ENCODE measurements at regions of chr10 and their contacts with region 1.

Region 1: DNA sequence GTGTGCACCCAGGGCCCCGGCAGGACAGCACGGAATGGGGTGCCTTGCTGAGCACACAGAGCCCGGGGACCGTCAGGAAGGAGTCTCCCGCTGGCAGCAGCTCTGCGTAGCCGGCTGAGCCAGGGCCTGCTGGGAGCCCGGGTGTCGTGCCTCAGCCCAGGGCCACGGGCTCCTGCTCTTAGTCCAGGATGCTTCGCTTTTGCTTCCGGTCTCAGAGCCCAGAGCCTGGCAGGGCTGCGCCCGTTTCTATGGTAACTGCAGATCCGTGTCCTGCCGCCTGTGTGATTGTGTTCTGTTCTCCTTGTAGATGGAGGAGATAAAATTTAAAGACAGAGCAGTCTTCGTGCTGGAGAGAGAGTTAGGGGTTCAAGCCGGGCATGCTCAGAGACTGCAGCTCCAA is 53.7 kb upstream of the DPYSL4 start:
- DNase-seq: no peak
- ATAC-seq: no peak
- H3K4me3 Mint-ChIP-seq: no peak overlapping the region
- H3K27ac Mint-ChIP-seq: no peak overlapping the region
- H3K4me1 Mint-ChIP-seq: no peaks in the 10 kb centered on the region
- H3K27me3 Mint-ChIP-seq: peaks cover 9% of the 10 kb centered on the region

Region 2: DNA sequence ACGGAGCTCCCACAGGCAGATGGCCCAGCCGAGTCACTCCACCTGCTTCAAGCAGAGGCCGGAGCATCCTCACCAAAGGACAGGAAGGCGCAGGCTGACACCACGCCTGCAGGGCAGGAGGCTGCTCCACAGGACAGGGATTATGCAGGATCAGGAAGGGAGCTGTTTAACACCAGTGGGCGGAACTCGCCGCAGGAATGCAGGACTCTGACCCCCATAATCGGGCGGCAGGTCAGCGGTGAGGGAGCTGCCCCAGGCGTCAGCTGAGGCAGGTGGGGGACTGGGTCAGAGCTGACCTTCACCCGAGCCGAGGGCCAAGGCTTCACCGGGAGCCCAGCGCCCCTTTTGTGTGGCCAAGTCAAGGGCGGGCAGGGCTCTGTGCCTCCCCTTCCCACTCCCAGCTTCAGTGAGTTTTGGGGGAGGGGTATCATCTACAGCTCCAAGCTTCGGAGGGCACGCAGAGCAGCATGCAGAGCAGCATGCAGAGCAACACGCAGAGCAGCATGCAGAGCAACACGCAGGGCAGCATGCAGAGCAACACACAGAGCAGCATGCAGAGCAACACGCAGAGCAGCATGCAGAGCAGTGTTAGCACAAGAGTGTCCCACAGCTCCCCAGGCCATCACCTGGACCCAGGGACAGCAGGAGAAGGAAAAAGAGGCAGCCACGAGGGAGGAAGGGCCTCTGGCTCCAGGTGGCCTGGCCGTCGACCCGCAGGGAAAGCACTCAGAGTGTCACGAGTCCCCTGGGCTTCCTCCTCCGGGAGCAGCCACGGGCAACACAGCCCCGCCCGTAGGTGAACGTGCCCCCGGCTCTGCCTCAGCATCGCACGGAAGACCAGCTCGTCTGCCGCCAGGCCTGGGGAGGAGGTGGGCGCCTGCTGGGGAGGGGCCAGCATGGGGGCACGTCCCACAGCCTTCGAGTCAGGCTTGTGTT is 383.9 kb before region 1 on chr10:
- CTCF ChIA-PET with region 1: no interaction called
- POLR2A ChIA-PET with region 1: no interaction called
- intact Hi-C with region 1: loop called in 1 of 2 experiments (anchors 5 kb)
- DNase-seq: no peak
- ATAC-seq: no peak
- H3K4me3 Mint-ChIP-seq: no peak overlapping the region
- H3K27ac Mint-ChIP-seq: no peak overlapping the region
- H3K4me1 Mint-ChIP-seq: no peaks in the 10 kb centered on the region
- H3K27me3 Mint-ChIP-seq: peaks cover 17% of the 10 kb centered on the region